Stomach (tissue), 19 donors: ENCODE measurements at regions of chr15 and their contacts with region 1.

Region 1: GRCh38 chr15:85168642-85169173 is 187.1 kb downstream of the PDE8A start:
- DNase-seq: peak; percentile 79 to 82
- H3K4me3 ChIP-seq: peak overlapping the region; percentile 19 to 44 (median 32)
- H3K27ac ChIP-seq: no peak overlapping the region
- H3K4me1 ChIP-seq: peaks cover 0 to 9% (median 9%) of the 10 kb centered on the region in 4 donors
- H3K27me3 ChIP-seq: peaks cover 0 to 21% (median 0%) of the 10 kb centered on the region in 3 donors
- CTCF ChIP-seq: peak in 4 of 7 experiments; percentile 11 to 47 (median 29)
- EP300 ChIP-seq: no peak
- POLR2A ChIP-seq: no peak

Region 2: DNA sequence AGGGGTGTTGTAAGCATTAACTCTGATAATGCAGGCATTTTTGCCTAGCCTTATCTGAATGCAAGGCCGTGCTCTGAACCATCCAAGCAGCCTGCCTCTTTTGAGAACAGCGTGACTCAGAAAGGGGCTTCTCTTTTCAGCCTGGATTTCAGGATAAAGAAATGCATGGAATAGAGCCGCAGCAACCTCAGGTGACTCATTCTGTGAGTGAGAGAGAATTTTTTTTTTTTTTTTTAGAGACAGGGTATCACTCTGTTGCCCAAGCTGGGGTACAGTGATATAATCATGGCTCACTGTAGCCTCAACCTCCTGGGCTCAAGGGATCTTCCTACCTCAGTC is 207.6 kb before region 1 on chr15:
- intact Hi-C with region 1: loop called (anchors 10 kb)
- DNase-seq: no peak
- H3K4me3 ChIP-seq: no peak overlapping the region
- H3K27ac ChIP-seq: no peak overlapping the region
- H3K4me1 ChIP-seq: peaks cover 0 to 11% (median 3%) of the 10 kb centered on the region in 4 donors
- H3K27me3 ChIP-seq: no peaks in the 10 kb centered on the region
- CTCF ChIP-seq: no peak
- EP300 ChIP-seq: no peak
- POLR2A ChIP-seq: no peak

Region 3: DNA sequence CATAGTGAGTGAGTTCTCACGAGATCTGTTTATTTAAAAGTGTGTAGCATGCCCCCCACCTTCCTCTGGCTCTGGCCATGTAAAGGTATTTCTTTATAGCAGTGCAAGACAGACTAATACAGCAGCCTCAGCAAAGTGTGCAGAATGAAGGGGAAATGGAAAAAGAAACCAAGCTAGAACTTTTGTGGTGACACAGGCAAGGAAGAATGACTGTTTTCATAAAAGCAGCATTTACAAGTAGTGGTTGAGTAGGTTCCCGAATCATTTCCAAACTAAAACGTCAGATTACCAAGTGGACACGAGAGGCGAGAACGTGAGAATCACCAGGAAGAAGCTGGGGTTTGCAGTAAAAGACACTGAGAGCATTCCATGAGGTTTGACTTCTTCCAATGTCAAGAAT is 111.5 kb after region 1 on chr15:
- intact Hi-C with region 1: no loop called
- DNase-seq: no peak
- H3K4me3 ChIP-seq: no peak overlapping the region
- H3K27ac ChIP-seq: no peak overlapping the region
- H3K4me1 ChIP-seq: peaks cover 0 to 4% (median 0%) of the 10 kb centered on the region in 4 donors
- H3K27me3 ChIP-seq: no peaks in the 10 kb centered on the region
- CTCF ChIP-seq: no peak
- EP300 ChIP-seq: no peak
- POLR2A ChIP-seq: no peak